B cell (primary cell): ENCODE measurements at regions of chr15 and their contacts with region 1.

Region 1: GRCh38 chr15:42273102-42273899 is at the starts of genes GANC and TMEM87A:
- DNase-seq: peak; percentile 97
- ATAC-seq: peak; percentile 87
- H3K4me3 ChIP-seq: peak within 1 kb of the TSS; percentile 88 to 100 (median 88)
- H3K4me3 Mint-ChIP-seq: peak within 1 kb of the TSS; percentile 90
- H3K27ac ChIP-seq: peak within 1 kb of the TSS; percentile 87 to 88
- H3K27ac Mint-ChIP-seq: peak within 1 kb of the TSS; percentile 99
- H3K4me1 ChIP-seq: peaks cover 26 to 28% of the 10 kb centered on the region in 2 donors
- H3K4me1 Mint-ChIP-seq: peaks cover 55% of the 10 kb centered on the region
- H3K27me3 ChIP-seq: no peaks in the 10 kb centered on the region
- H3K27me3 Mint-ChIP-seq: no peaks in the 10 kb centered on the region
- CTCF ChIP-seq: no peak
- total RNA-seq, gene GANC: 122 and 131 TPM in 2 replicates
- total RNA-seq, gene TMEM87A: 61.0 and 61.5 TPM in 2 replicates

Region 2: DNA sequence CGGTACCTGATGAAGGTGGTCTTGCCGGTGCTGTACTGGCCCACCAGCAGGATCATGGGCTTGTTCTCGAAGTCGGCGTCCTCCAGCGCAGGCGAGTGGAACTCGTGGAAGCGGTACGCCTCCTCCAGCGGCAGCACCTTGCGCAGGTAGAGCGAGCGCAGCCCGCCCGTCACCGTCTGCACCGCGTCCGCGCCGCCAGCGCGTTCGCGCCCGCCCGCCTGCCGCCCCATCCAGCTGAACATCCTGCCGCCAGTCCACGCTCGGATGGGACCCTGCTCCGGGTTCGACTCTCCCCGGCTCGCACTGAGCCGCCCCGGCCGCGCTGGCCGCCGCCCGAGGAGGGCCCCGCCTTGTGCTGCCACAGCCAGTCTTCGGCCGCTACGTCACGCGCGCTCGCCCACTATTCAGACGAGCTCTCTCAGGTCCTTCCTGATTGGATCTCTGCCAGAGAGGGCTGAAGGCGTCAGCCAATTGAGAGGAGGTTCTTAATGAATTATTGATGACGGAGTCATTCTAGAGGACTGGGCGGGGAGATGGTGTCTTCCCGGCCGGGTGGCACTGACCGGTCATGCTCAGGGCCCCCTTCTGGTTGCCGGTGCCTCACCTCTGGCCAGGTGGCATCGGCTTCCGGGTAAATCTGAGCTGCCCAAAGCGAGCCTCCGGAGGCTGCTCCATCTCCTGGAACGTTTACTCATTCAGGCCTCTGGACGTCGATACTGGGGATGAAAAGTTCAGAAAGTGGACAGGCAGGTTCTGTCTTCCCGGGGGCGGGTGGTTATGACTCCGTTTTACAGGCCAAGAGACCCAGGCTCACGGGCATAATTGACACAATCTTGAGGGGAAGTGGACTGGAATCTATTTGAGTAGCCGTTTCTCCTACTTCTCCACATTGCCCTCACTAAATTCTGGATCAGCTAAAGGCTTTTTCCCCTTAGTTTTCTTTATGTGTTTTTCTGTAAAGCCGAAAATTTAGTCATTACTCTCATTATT is 300.8 kb before region 1 on chr15 and contains the start of gene EHD4:
- CTCF ChIA-PET with region 1: no interaction called
- POLR2A ChIA-PET with region 1: no interaction called
- intact Hi-C with region 1: loop called (anchors 5 kb)
- DNase-seq: peak; percentile 95
- ATAC-seq: peak; percentile 87
- H3K4me3 ChIP-seq: peak within 1 kb of the TSS; percentile 62 to 95 (median 83)
- H3K4me3 Mint-ChIP-seq: peak within 1 kb of the TSS; percentile 90
- H3K27ac ChIP-seq: peak within 1 kb of the TSS; percentile 71 to 84
- H3K27ac Mint-ChIP-seq: peak within 1 kb of the TSS; percentile 95
- H3K4me1 ChIP-seq: peaks cover 42 to 43% of the 10 kb centered on the region in 2 donors
- H3K4me1 Mint-ChIP-seq: peaks cover 47% of the 10 kb centered on the region
- H3K27me3 ChIP-seq: no peaks in the 10 kb centered on the region
- H3K27me3 Mint-ChIP-seq: peaks cover 16% of the 10 kb centered on the region
- CTCF ChIP-seq: no peak
- total RNA-seq, gene EHD4: 12.7 and 13.4 TPM in 2 replicates

Region 3: DNA sequence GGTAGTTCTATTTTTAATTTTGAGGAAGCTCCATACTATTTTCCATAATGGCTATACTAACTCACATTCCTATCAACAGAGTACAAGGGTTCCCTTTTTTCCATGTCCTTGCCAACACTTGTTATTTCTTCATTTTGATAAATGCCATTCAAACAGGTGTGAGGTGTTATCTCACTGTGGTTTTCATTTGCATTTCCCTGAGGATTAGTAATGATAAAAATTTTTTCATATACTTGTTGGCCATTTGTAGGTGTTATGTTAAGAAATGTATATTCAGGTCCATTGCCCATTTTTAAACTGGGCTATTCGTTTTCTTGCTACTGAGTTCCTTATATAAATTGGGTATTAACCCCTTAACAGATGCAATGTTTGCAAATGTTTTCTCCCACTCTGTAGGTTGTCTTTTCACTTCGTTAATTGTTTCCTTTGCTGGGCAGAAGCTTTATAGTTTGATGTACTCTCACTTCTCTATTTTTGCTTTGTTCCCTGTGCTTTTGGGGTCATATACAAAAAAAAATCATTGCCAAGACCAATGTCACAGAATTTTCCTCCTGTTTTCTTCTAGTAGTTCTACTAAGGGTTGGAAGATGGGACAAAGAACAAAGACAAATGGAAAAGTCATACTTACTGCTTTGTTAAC is 54.2 kb before region 1 on chr15:
- CTCF ChIA-PET with region 1: interaction called, 3 read pairs
- POLR2A ChIA-PET with region 1: interaction called, 4 read pairs
- intact Hi-C with region 1: loop called (anchors 2 kb)
- DNase-seq: peak; percentile 52
- ATAC-seq: peak; percentile 75
- H3K4me3 ChIP-seq: no peak overlapping the region
- H3K4me3 Mint-ChIP-seq: peak overlapping the region; percentile 7
- H3K27ac ChIP-seq: peak overlapping the region; percentile 11 to 64
- H3K27ac Mint-ChIP-seq: peak overlapping the region; percentile 18
- H3K4me1 ChIP-seq: peaks cover 11 to 19% of the 10 kb centered on the region in 2 donors
- H3K4me1 Mint-ChIP-seq: peaks cover 23% of the 10 kb centered on the region
- H3K27me3 ChIP-seq: no peaks in the 10 kb centered on the region
- H3K27me3 Mint-ChIP-seq: no peaks in the 10 kb centered on the region
- CTCF ChIP-seq: no peak

Region 4: DNA sequence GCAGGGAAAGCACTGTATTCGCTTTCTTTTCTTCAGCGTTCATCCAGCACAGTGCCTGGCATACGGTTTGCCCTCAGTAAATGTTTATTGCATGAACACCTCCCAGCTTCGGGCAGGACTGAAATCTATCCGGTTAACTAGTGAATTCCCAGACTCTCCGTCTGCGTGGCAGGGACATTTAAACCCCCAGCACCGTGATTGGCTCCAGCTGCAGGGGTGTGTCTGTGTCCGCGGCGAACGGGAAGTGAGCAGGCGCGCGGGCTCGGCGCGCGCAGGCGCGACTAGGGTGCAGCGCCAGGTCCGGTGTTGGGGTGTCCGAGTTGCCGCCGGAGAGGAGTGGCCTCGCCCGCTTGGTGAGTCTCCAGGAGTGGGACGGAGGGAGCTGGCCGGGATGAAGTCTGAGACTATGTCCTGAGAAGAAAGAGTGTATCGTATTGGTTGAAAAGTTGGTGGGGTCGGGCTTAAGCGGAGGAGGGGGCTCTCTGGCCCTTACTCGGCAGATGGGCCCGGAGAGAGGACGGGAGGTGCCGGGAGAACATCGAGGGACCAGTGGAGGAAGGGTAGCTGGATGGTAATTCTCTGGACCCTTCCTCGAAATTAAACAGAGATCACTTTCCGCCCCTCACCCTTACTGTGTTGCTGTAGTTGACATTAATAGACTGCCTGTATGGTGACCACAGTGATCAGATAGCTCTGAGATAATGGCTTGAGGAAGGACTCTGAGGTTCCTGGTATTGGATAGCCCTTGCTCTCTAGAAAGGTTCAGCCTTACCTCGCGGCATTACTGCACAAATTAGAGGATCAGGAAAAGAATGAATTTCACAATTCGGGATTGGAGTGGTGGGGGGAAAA is 222.3 kb after region 1 on chr15 and contains the start of gene SNAP23:
- CTCF ChIA-PET with region 1: no interaction called
- POLR2A ChIA-PET with region 1: interaction called, 5 read pairs
- intact Hi-C with region 1: loop called (anchors 10 kb)
- DNase-seq: peak; percentile 84
- ATAC-seq: peak; percentile 83
- H3K4me3 ChIP-seq: peak within 1 kb of the TSS; percentile 72 to 96 (median 95)
- H3K4me3 Mint-ChIP-seq: peak within 1 kb of the TSS; percentile 96
- H3K27ac ChIP-seq: peak within 1 kb of the TSS; percentile 64 to 71
- H3K27ac Mint-ChIP-seq: peak within 1 kb of the TSS; percentile 91
- H3K4me1 ChIP-seq: peaks cover 62 to 74% of the 10 kb centered on the region in 2 donors
- H3K4me1 Mint-ChIP-seq: peaks cover 84% of the 10 kb centered on the region
- H3K27me3 ChIP-seq: no peaks in the 10 kb centered on the region
- H3K27me3 Mint-ChIP-seq: no peaks in the 10 kb centered on the region
- CTCF ChIP-seq: no peak
- total RNA-seq, gene SNAP23: 133 and 140 TPM in 2 replicates

Region 5: GRCh38 chr15:42920519-42921227 is 647.4 kb after region 1 on chr15 and contains the start of gene TTBK2:
- CTCF ChIA-PET with region 1: no interaction called
- POLR2A ChIA-PET with region 1: no interaction called
- intact Hi-C with region 1: loop called (anchors 2 kb)
- DNase-seq: peak; percentile 99
- ATAC-seq: peak; percentile 95
- H3K4me3 ChIP-seq: peak within 1 kb of the TSS; percentile 67 to 94 (median 73)
- H3K4me3 Mint-ChIP-seq: peak within 1 kb of the TSS; percentile 90
- H3K27ac ChIP-seq: peak within 1 kb of the TSS; percentile 41 to 46
- H3K27ac Mint-ChIP-seq: peak within 1 kb of the TSS; percentile 92
- H3K4me1 ChIP-seq: peaks cover 12 to 23% of the 10 kb centered on the region in 2 donors
- H3K4me1 Mint-ChIP-seq: peaks cover 34% of the 10 kb centered on the region
- H3K27me3 ChIP-seq: no peaks in the 10 kb centered on the region
- H3K27me3 Mint-ChIP-seq: no peaks in the 10 kb centered on the region
- CTCF ChIP-seq: peak; percentile 16
- total RNA-seq, gene TTBK2: 38.7 and 39.6 TPM in 2 replicates